ENCODE measurements at regions of chr16 and their contacts with region 1.

Region 1: GRCh38 chr16:684067-684794 is at the start of gene JMJD8:
- DNase-seq: peak; percentile 98
- H3K4me3 ChIP-seq: peak within 1 kb of the TSS; percentile 49 to 83 (median 79)
- H3K27ac ChIP-seq: peak within 1 kb of the TSS; percentile 82 to 87 (median 83)
- H3K4me1 ChIP-seq: peaks cover 0 to 72% (median 67%) of the 10 kb centered on the region in 4 donors
- H3K27me3 ChIP-seq: no peaks in the 10 kb centered on the region
- CTCF ChIP-seq: no peak
- EP300 ChIP-seq: no peak
- POLR2A ChIP-seq: no peak
- total RNA-seq, gene JMJD8: 52.8 to 93.4 (median 73.8) TPM

Region 2: GRCh38 chr16:720990-721764 is 36.9 kb after region 1 on chr16 and contains the start of gene ANTKMT:
- intact Hi-C with region 1: loop called (anchors 2 kb)
- DNase-seq: peak; percentile 86
- H3K4me3 ChIP-seq: peak within 1 kb of the TSS; percentile 58 to 71 (median 64)
- H3K27ac ChIP-seq: peak within 1 kb of the TSS; percentile 85 to 93 (median 89)
- H3K4me1 ChIP-seq: peaks cover 0 to 40% (median 31%) of the 10 kb centered on the region in 4 donors
- H3K27me3 ChIP-seq: peaks cover 5 to 19% (median 7%) of the 10 kb centered on the region in 3 donors
- CTCF ChIP-seq: no peak
- EP300 ChIP-seq: no peak
- POLR2A ChIP-seq: no peak
- total RNA-seq, gene ANTKMT: 27.1 to 53.1 (median 39.5) TPM

Region 3: DNA sequence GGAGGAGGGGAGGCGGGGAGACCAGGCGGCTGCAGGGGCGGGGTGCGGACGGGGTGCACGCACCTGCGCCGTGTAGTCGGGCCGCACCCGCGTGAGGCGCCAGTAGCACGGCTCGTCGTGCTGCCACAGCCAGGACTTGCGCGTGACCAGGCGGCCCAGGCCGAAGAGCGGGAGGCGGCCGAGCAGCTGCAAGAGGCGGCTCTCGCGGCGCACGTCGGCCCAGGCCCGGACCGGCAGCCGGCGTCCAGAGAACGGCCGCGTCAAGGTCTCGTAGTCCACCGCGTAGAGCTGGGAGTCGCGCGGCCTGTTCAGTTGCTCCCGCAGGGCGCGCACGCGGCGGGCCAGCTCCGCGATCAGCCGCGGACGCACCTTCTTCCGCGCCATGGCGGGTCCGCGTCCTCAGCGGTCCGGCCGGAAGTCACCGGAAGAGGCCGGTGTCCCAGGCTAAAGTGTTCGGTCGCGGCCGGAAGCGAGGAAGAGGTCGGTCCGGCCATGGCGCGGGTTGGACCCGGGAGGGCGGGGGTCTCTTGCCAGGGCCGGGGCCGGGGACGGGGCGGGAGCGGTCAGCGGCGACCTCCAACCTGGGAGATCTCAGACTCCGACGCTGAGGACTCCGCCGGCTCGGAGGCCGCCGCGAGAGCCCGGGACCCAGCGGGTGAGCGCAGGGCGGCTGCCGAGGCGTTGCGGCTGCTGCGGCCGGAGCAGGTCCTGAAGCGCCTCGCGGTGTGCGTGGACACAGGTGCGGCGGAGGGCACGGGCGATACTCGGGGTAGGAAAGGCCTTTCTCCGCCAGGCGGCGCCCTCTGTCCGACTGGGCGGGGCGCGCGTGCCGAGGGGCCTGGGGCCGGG is 1088.7 kb after region 1 on chr16 and contains the starts of genes EME2 and MRPS34:
- intact Hi-C with region 1: loop called (anchors 10 kb)
- DNase-seq: peak; percentile 90
- H3K4me3 ChIP-seq: peak within 1 kb of the TSS; percentile 64 to 93 (median 90)
- H3K27ac ChIP-seq: peak within 1 kb of the TSS; percentile 91 to 97 (median 96)
- H3K4me1 ChIP-seq: peaks cover 0 to 56% (median 47%) of the 10 kb centered on the region in 4 donors
- H3K27me3 ChIP-seq: no peaks in the 10 kb centered on the region
- CTCF ChIP-seq: peak; percentile 37 to 74 (median 64)
- EP300 ChIP-seq: peak in 1 of 4 donors; percentile 25
- POLR2A ChIP-seq: peak; percentile 55 to 68
- total RNA-seq, gene EME2: 4.3 to 10.5 (median 7.2) TPM
- total RNA-seq, gene MRPS34: 61.5 to 104 (median 71.1) TPM

Measured in sigmoid colon (tissue), 7 donors.